ENCODE measurements at regions of chr9 and their contacts with region 1.

Region 1: GRCh38 chr9:115850548-115851304 is 302.9 kb upstream of the PAPPA start:
- DNase-seq: no peak
- ATAC-seq: no peak
- H3K4me3 ChIP-seq: no peak overlapping the region
- H3K27ac ChIP-seq: no peak overlapping the region
- H3K4me1 ChIP-seq: no peaks in the 10 kb centered on the region
- H3K27me3 ChIP-seq: no peaks in the 10 kb centered on the region
- CTCF ChIP-seq: no peak

Region 2: GRCh38 chr9:115808108-115808507 is 42.6 kb before region 1 on chr9:
- CTCF ChIA-PET with region 1: no interaction called
- POLR2A ChIA-PET with region 1: no interaction called
- in situ Hi-C with region 1: no loop called
- intact Hi-C with region 1: no loop called
- DNase-seq: no peak
- ATAC-seq: no peak
- H3K4me3 ChIP-seq: no peak overlapping the region
- H3K27ac ChIP-seq: no peak overlapping the region
- H3K4me1 ChIP-seq: no peaks in the 10 kb centered on the region
- H3K27me3 ChIP-seq: no peaks in the 10 kb centered on the region
- CTCF ChIP-seq: no peak

Region 3: GRCh38 chr9:115944166-115944948 is 93.6 kb after region 1 on chr9:
- CTCF ChIA-PET with region 1: interaction called, 11 read pairs
- POLR2A ChIA-PET with region 1: no interaction called
- in situ Hi-C with region 1: no loop called
- intact Hi-C with region 1: no loop called
- DNase-seq: no peak
- ATAC-seq: no peak; the same call in 1 of the 2 replicates
- H3K4me3 ChIP-seq: no peak overlapping the region
- H3K27ac ChIP-seq: no peak overlapping the region; the same call in 1 of the 2 replicates
- H3K4me1 ChIP-seq: no peaks in the 10 kb centered on the region
- H3K27me3 ChIP-seq: no peaks in the 10 kb centered on the region
- CTCF ChIP-seq: no peak

Measured in Panc1 (cell line).